K562 (cell line): ENCODE measurements at regions of chr9 and their contacts with region 1.

Region 1: GRCh38 chr9:37784616-37785483 is at the start of gene EXOSC3:
- DNase-seq: peak; percentile 88 to 98 (median 90)
- ATAC-seq: peak; percentile 97
- H3K4me3 ChIP-seq: peak within 1 kb of the TSS; percentile 82
- H3K27ac ChIP-seq: peak within 1 kb of the TSS; percentile 91
- H3K4me1 ChIP-seq: peaks cover 8 to 24% of the 10 kb centered on the region in 2 experiments; a peak in 4 of 5 replicates
- H3K27me3 ChIP-seq: no peaks in the 10 kb centered on the region
- CTCF ChIP-seq: peak; percentile 26 to 41 (median 29); a peak in 3 of 6 replicates
- EP300 ChIP-seq: no peak
- POLR2A ChIP-seq: peak; percentile 98
- RAD21 ChIP-seq: peak in 1 of 2 experiments; percentile 38; a peak in 1 of 4 replicates
- polyA plus RNA-seq, gene EXOSC3: 18.5 to 29.6 TPM

Region 2: DNA sequence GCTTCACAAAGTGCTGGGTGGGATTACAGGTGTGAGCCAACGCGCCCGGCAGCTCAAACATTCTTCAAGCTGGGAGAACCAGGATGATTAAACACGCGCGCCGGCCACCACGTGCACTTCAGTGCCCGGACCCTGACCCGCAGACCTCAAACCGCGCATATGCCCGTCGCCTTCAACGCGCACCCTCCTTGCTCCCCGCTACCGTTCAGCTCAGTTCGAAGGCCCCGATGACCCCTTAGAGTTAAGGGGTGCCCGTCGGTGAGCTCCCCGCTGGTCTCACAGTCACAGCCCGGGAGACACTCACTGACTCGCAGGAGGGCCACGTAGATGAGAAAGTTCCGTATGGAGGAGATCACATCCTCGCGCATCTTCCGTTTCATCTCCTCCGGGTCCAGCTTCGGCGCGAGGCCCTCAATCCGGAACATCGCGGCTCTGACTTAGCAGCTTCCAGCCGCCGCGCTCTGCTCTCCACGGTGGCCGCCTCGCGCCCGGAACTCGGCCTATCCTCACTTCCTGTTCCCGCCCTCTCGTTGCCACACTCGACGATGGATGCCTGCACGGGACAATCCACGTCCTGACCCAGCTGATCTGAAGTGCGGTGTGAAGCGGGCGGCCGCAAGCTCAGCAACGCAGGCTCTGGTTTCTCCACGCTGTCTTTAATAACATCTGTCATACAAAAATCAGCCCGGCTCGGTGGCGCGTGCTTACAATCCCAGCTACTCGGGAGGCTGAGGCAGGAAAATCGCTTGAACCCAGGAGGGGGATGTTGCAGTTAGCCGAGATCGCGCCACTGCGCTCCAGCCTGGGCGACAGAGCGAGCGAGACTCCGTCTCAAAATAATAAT is 192.5 kb before region 1 on chr9 and contains the start of gene TOMM5:
- CTCF ChIA-PET with region 1: no interaction called
- POLR2A ChIA-PET with region 1: no interaction called
- in situ Hi-C with region 1: no loop called
- intact Hi-C with region 1: loop called (anchors 5 kb)
- DNase-seq: peak; percentile 88 to 97 (median 90)
- ATAC-seq: peak; percentile 92
- H3K4me3 ChIP-seq: peak within 1 kb of the TSS; percentile 57
- H3K27ac ChIP-seq: peak within 1 kb of the TSS; percentile 87
- H3K4me1 ChIP-seq: peaks cover 20 to 31% of the 10 kb centered on the region in 2 experiments
- H3K27me3 ChIP-seq: no peaks in the 10 kb centered on the region
- CTCF ChIP-seq: no peak; a peak in 1 of 6 replicates
- EP300 ChIP-seq: peak; percentile 52
- POLR2A ChIP-seq: peak; percentile 99
- RAD21 ChIP-seq: no peak
- polyA plus RNA-seq, gene TOMM5: 1,739 to 1,742 TPM

Region 3: GRCh38 chr9:37769306-37769705 is 15.5 kb before region 1 on chr9:
- CTCF ChIA-PET with region 1: no interaction called
- POLR2A ChIA-PET with region 1: interaction called, 32 read pairs
- in situ Hi-C with region 1: no loop called
- intact Hi-C with region 1: no loop called
- DNase-seq: peak in 3 of 4 experiments; percentile 27 to 89 (median 82)
- ATAC-seq: peak; percentile 86
- H3K4me3 ChIP-seq: no peak overlapping the region
- H3K27ac ChIP-seq: peak overlapping the region; percentile 26
- H3K4me1 ChIP-seq: peaks cover 17 to 21% of the 10 kb centered on the region in 2 experiments; a peak in 4 of 5 replicates
- H3K27me3 ChIP-seq: no peaks in the 10 kb centered on the region
- CTCF ChIP-seq: no peak
- EP300 ChIP-seq: peak; percentile 60; the same call in 1 of the 2 replicates
- POLR2A ChIP-seq: no peak
- RAD21 ChIP-seq: no peak

Region 4: GRCh38 chr9:37800631-37801286 is 15.9 kb after region 1 on chr9 and contains the start of gene DCAF10:
- CTCF ChIA-PET with region 1: no interaction called
- POLR2A ChIA-PET with region 1: interaction called, 14 read pairs
- in situ Hi-C with region 1: no loop called
- intact Hi-C with region 1: no loop called
- DNase-seq: peak; percentile 90 to 95 (median 94)
- ATAC-seq: peak; percentile 84
- H3K4me3 ChIP-seq: peak within 1 kb of the TSS; percentile 92
- H3K27ac ChIP-seq: peak within 1 kb of the TSS; percentile 85
- H3K4me1 ChIP-seq: peaks cover 8 to 17% of the 10 kb centered on the region in 2 experiments; a peak in 4 of 5 replicates
- H3K27me3 ChIP-seq: no peaks in the 10 kb centered on the region
- CTCF ChIP-seq: peak in 2 of 3 experiments; percentile 23 to 25; a peak in 2 of 6 replicates
- EP300 ChIP-seq: peak; percentile 72
- POLR2A ChIP-seq: peak; percentile 93
- RAD21 ChIP-seq: peak in 1 of 2 experiments; percentile 18; a peak in 2 of 4 replicates
- polyA plus RNA-seq, gene DCAF10: 6.8 to 7.4 TPM

Region 5: DNA sequence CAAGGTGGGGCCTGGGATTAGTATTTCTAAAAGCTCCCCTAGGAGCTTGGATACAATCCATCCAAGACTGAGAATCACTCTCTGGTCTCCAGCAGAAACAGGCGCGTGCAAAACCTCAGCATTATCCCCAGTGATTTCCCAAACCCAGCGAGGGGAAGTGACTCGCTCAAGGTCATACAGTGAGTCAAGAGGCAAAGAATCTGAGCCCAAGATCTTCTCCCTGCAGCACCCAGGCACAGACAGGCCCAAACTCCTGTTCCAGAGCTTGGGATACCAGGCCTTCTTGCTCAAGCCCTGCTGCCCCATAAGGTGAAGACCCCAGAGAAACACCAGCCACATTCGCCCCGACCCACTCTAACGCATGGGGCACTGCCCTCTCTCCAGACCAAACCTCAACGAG is 251.0 kb after region 1 on chr9:
- CTCF ChIA-PET with region 1: no interaction called
- POLR2A ChIA-PET with region 1: no interaction called
- in situ Hi-C with region 1: no loop called
- intact Hi-C with region 1: no loop called
- DNase-seq: peak in 2 of 4 experiments; percentile 32 to 54
- ATAC-seq: no peak
- H3K4me3 ChIP-seq: no peak overlapping the region
- H3K27ac ChIP-seq: no peak overlapping the region
- H3K4me1 ChIP-seq: peaks cover 48 to 52% of the 10 kb centered on the region in 2 experiments
- H3K27me3 ChIP-seq: no peaks in the 10 kb centered on the region
- CTCF ChIP-seq: no peak
- EP300 ChIP-seq: peak; percentile 30; the same call in 1 of the 2 replicates
- POLR2A ChIP-seq: no peak
- RAD21 ChIP-seq: no peak

Region 6: GRCh38 chr9:38068866-38069629 is 284.2 kb after region 1 on chr9 and contains the start of gene SHB:
- CTCF ChIA-PET with region 1: no interaction called
- POLR2A ChIA-PET with region 1: no interaction called
- in situ Hi-C with region 1: no loop called
- intact Hi-C with region 1: loop called (anchors 10 kb)
- DNase-seq: peak; percentile 89 to 99 (median 98)
- ATAC-seq: peak; percentile 77
- H3K4me3 ChIP-seq: peak within 1 kb of the TSS; percentile 90
- H3K27ac ChIP-seq: peak within 1 kb of the TSS; percentile 81
- H3K4me1 ChIP-seq: peaks cover 39 to 49% of the 10 kb centered on the region in 2 experiments
- H3K27me3 ChIP-seq: no peaks in the 10 kb centered on the region; a peak in 1 of 5 replicates
- CTCF ChIP-seq: peak in 1 of 3 experiments; percentile 53; a peak in 1 of 6 replicates
- EP300 ChIP-seq: no peak
- POLR2A ChIP-seq: peak; percentile 62; the same call in 1 of the 2 replicates
- RAD21 ChIP-seq: peak in 1 of 2 experiments; percentile 59; a peak in 1 of 4 replicates
- polyA plus RNA-seq, gene SHB: 0.78 to 1.0 TPM